Activated B cell treated with CpG ODN at 0.5 μM for 24 hours (primary cell): ENCODE measurements at regions of chr5 and their contacts with region 1.

Region 1: GRCh38 chr5:141923448-141924352 is at the start of gene DELE1:
- DNase-seq: peak; percentile 84
- ATAC-seq: peak; percentile 96
- H3K4me3 Mint-ChIP-seq: peak within 1 kb of the TSS; percentile 91
- H3K27ac Mint-ChIP-seq: peak within 1 kb of the TSS; percentile 95
- H3K4me1 Mint-ChIP-seq: peaks cover 23% of the 10 kb centered on the region
- H3K27me3 Mint-ChIP-seq: no peaks in the 10 kb centered on the region
- CTCF ChIP-seq: no peak
- total RNA-seq, gene DELE1: 95.0 and 114 TPM in 2 replicates

Region 2: GRCh38 chr5:141849375-141850243 is 74.1 kb before region 1 on chr5:
- CTCF ChIA-PET with region 1: no interaction called
- POLR2A ChIA-PET with region 1: interaction called, 4 read pairs
- intact Hi-C with region 1: loop called (anchors 1 kb)
- DNase-seq: peak; percentile 66
- ATAC-seq: peak; percentile 84
- H3K4me3 Mint-ChIP-seq: peak overlapping the region; percentile 87
- H3K27ac Mint-ChIP-seq: peak overlapping the region; percentile 53
- H3K4me1 Mint-ChIP-seq: peaks cover 9% of the 10 kb centered on the region
- H3K27me3 Mint-ChIP-seq: peaks cover 11% of the 10 kb centered on the region
- CTCF ChIP-seq: no peak

Region 3: DNA sequence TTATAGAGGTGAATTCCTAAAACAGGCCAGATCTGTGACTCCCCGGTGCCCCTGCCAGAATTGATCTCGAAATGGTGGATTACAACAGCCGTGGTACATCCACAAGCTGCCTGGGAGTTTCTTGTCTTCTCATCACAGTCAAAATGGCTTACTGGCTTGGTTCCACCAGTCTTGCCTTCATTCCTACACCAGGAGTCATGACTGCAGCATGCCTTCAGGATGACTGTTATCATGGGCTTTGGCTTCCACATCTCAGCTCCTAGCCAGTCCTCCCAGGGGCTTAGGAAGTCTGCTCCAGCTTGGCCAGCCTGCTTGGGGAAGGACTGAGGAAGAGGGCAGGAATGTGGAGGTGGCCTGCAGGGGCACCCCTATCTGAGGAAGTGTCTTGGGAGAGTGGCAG is 1612.7 kb after region 1 on chr5:
- CTCF ChIA-PET with region 1: no interaction called
- POLR2A ChIA-PET with region 1: no interaction called
- intact Hi-C with region 1: no loop called
- DNase-seq: no peak
- ATAC-seq: no peak
- H3K4me3 Mint-ChIP-seq: no peak overlapping the region
- H3K27ac Mint-ChIP-seq: no peak overlapping the region
- H3K4me1 Mint-ChIP-seq: no peaks in the 10 kb centered on the region
- H3K27me3 Mint-ChIP-seq: no peaks in the 10 kb centered on the region
- CTCF ChIP-seq: no peak